ENCODE measurements at regions of chr9 and their contacts with region 1.

Region 1: DNA sequence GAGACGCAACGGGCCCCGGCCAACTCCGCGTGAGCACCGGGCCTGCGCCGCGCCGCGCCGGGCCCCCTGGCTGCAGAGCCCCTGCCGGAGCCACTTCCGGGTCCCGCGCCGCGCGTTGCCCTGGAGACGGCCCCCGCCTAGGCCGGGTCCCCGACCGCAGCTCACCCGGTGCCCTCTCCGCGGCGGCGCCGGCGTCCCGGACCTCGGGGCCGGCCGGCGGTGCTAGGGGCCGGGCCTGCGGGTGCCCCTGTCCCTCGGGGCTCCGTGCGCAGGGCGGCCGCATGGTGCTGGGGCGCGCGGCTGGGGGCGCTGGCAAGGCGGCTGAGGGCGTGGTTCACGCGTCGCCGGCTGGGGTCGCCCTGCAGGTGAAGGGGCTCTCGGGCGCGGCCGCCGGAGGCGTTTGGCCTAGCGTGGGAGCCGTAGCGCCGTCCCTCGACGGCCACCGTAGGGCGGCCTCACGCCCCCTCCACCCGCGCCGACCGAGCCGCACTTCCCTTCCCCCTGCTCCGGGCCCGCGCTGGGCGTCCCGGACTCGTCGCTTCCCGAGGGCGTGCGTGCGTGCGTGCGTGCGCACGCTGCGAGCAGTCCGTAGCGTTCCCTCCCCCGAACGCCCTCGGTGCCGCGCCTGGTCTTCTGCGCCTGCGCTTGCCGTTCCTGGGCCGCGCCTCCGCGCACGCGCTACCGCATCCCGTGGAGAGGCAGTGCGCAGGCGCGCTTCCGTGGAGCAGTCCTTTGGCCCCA is at the start of gene TMEM250:
- DNase-seq: peak; percentile 97
- H3K4me3 ChIP-seq: peak within 1 kb of the TSS; percentile 80
- H3K27ac ChIP-seq: peak within 1 kb of the TSS; percentile 57
- H3K4me1 ChIP-seq: peaks cover 17% of the 10 kb centered on the region
- CTCF ChIP-seq: no peak
- total RNA-seq, gene TMEM250: 38.4 and 51.0 TPM in 2 replicates

Region 2: DNA sequence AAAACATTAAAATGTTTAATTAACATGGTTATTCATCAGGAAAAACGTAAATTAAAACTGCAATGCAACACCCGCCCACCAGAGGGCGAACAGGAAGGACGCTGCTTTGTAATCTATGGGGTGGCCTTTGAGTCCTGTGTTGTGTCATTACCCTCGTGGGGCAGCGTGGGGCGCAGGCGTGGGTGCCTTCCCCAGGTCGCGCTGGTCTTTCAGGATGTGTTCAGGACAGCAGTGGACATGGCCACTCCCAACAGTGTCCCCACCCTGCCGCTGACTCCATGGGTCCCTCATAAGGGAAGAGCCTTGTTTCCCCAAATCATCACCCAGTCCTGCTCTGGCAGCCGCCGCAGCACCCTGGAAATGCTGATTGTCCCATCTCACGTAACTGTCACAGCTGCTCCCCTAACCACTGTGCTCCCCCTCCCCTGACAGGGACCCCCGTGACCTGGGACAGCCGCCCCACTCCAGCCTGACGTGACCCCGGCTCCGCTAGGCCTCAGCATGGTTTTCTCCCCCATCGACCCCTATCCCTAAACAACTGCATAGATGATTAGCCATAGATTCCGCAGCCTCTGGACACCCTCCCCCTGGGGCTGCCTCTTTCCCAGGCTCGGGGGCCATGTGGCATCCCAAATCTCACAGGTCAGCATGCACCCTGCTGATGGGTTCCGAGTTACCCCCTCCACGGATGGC is 515.6 kb before region 1 on chr9:
- CTCF ChIA-PET with region 1: no interaction called
- POLR2A ChIA-PET with region 1: no interaction called
- intact Hi-C with region 1: loop called (anchors 5 kb)
- DNase-seq: peak; percentile 57
- H3K4me3 ChIP-seq: no peak overlapping the region
- H3K27ac ChIP-seq: no peak overlapping the region
- H3K4me1 ChIP-seq: no peaks in the 10 kb centered on the region
- CTCF ChIP-seq: peak; percentile 79

Region 3: DNA sequence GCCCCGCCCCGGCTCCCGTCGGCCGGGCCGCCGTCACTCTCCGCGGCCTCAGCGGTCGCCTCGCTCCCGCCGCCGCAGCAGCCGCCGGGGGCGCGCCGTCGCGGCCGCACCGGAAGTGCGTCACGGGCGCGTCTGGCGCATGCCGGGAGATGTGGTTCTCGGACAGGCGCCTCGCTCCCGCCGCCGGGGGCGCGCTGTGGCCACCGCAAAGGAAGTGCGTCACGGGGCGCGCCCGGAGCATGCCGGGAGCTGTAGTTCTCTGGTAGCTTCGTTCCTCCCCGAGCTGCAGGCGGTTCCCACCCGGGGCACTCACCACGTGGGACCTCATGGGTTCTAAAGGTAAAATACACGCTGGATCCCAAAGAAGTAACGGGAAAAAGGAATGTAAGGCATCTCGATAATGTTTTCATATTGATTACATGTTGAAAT is 157.2 kb before region 1 on chr9 and contains the start of gene UBAC1:
- CTCF ChIA-PET with region 1: no interaction called
- POLR2A ChIA-PET with region 1: no interaction called
- intact Hi-C with region 1: loop called (anchors 2 kb)
- DNase-seq: peak; percentile 97
- H3K4me3 ChIP-seq: peak within 1 kb of the TSS; percentile 98
- H3K27ac ChIP-seq: peak within 1 kb of the TSS; percentile 9
- H3K4me1 ChIP-seq: peaks cover 34% of the 10 kb centered on the region
- CTCF ChIP-seq: 0 out of 2 replicates have a peak, but pooled peaks have one; percentile 9
- total RNA-seq, gene UBAC1: 59.2 and 75.7 TPM in 2 replicates

Region 4: GRCh38 chr9:135992486-135993408 is 125.7 kb before region 1 on chr9:
- CTCF ChIA-PET with region 1: no interaction called
- POLR2A ChIA-PET with region 1: no interaction called
- intact Hi-C with region 1: loop called (anchors 1 kb)
- DNase-seq: peak; percentile 88
- H3K4me3 ChIP-seq: peak overlapping the region; percentile 54
- H3K27ac ChIP-seq: peak overlapping the region; percentile 78
- H3K4me1 ChIP-seq: peaks cover 52% of the 10 kb centered on the region
- CTCF ChIP-seq: 0 out of 2 replicates have a peak, but pooled peaks have one; percentile 23

Region 5: GRCh38 chr9:136089697-136090045 is 28.8 kb before region 1 on chr9:
- CTCF ChIA-PET with region 1: no interaction called
- POLR2A ChIA-PET with region 1: interaction called, 3 read pairs
- intact Hi-C with region 1: loop called (anchors 1 kb)
- DNase-seq: peak; percentile 39
- H3K4me3 ChIP-seq: no peak overlapping the region
- H3K27ac ChIP-seq: no peak overlapping the region
- H3K4me1 ChIP-seq: peaks cover 14% of the 10 kb centered on the region
- CTCF ChIP-seq: peak; percentile 75

Measured in OCI-LY7 (cell line).